Sigmoid colon (tissue), 7 donors: ENCODE measurements at regions of chr20 and their contacts with region 1.

Region 1: GRCh38 chr20:35741892-35742740 is at the start of gene RBM39:
- DNase-seq: peak; percentile 100
- H3K4me3 ChIP-seq: peak within 1 kb of the TSS; percentile 66 to 79 (median 74)
- H3K27ac ChIP-seq: peak within 1 kb of the TSS; percentile 94 to 98 (median 97)
- H3K4me1 ChIP-seq: peaks cover 0 to 41% (median 40%) of the 10 kb centered on the region in 4 donors
- H3K27me3 ChIP-seq: no peaks in the 10 kb centered on the region
- CTCF ChIP-seq: peak in 2 of 4 experiments; percentile 25 to 31
- EP300 ChIP-seq: peak in 2 of 4 donors; percentile 6 to 67
- POLR2A ChIP-seq: peak; percentile 96 to 97
- total RNA-seq, gene RBM39: 281 to 408 (median 296) TPM

Region 2: GRCh38 chr20:35619196-35620095 is 122.7 kb before region 1 on chr20:
- intact Hi-C with region 1: loop called (anchors 2 kb)
- DNase-seq: peak; percentile 92
- H3K4me3 ChIP-seq: peak overlapping the region; percentile 34 to 56 (median 43)
- H3K27ac ChIP-seq: peak overlapping the region; percentile 53 to 99 (median 88)
- H3K4me1 ChIP-seq: peaks cover 0 to 43% (median 33%) of the 10 kb centered on the region in 4 donors
- H3K27me3 ChIP-seq: no peaks in the 10 kb centered on the region
- CTCF ChIP-seq: peak in 2 of 4 experiments; percentile 6 to 10
- EP300 ChIP-seq: no peak
- POLR2A ChIP-seq: no peak

Region 3: GRCh38 chr20:35690265-35690664 is 51.9 kb before region 1 on chr20:
- intact Hi-C with region 1: no loop called
- DNase-seq: peak; percentile 5
- H3K4me3 ChIP-seq: no peak overlapping the region
- H3K27ac ChIP-seq: no peak overlapping the region
- H3K4me1 ChIP-seq: no peaks in the 10 kb centered on the region
- H3K27me3 ChIP-seq: no peaks in the 10 kb centered on the region
- CTCF ChIP-seq: no peak
- EP300 ChIP-seq: no peak
- POLR2A ChIP-seq: no peak

Region 4: GRCh38 chr20:35724321-35725230 is 17.5 kb before region 1 on chr20:
- intact Hi-C with region 1: loop called (anchors 2 kb)
- DNase-seq: no peak
- H3K4me3 ChIP-seq: no peak overlapping the region
- H3K27ac ChIP-seq: no peak overlapping the region
- H3K4me1 ChIP-seq: peaks cover 0 to 17% (median 6%) of the 10 kb centered on the region in 4 donors
- H3K27me3 ChIP-seq: no peaks in the 10 kb centered on the region
- CTCF ChIP-seq: no peak
- EP300 ChIP-seq: no peak
- POLR2A ChIP-seq: no peak

Region 5: GRCh38 chr20:35883778-35884540 is 141.8 kb after region 1 on chr20:
- intact Hi-C with region 1: loop called (anchors 1 kb)
- DNase-seq: peak; percentile 89
- H3K4me3 ChIP-seq: peak overlapping the region in 3 of 4 donors; percentile 18 to 33 (median 20)
- H3K27ac ChIP-seq: peak overlapping the region; percentile 70 to 88 (median 78)
- H3K4me1 ChIP-seq: peaks cover 0 to 27% (median 15%) of the 10 kb centered on the region in 4 donors
- H3K27me3 ChIP-seq: no peaks in the 10 kb centered on the region
- CTCF ChIP-seq: peak; percentile 66 to 75 (median 72)
- EP300 ChIP-seq: peak in 3 of 4 donors; percentile 50 to 88 (median 53)
- POLR2A ChIP-seq: no peak

Region 6: DNA sequence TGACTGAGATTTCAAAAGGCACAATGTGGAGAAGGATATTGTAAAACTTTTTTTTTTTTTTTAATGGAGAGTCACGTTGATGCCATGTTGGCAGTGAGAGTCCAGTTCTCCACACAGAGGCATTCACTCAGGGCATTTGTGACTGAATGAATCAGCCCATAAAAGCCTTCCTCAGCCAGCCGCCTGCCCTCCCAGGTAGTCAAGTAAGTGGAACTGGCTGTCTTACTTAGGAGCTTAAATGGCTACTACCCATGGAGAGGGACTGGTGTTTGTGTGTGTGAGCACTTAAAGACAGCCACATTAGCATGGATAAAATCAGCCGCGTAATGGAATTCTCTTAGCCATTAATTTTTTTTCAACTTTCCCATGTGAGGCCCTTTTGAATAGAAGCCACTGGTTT is 506.7 kb after region 1 on chr20:
- intact Hi-C with region 1: no loop called
- DNase-seq: peak; percentile 17
- H3K4me3 ChIP-seq: no peak overlapping the region
- H3K27ac ChIP-seq: no peak overlapping the region
- H3K4me1 ChIP-seq: no peaks in the 10 kb centered on the region
- H3K27me3 ChIP-seq: no peaks in the 10 kb centered on the region
- CTCF ChIP-seq: no peak
- EP300 ChIP-seq: no peak
- POLR2A ChIP-seq: no peak